Sigmoid colon (tissue), 7 donors: ENCODE measurements at regions of chr6 and their contacts with region 1.

Region 1: DNA sequence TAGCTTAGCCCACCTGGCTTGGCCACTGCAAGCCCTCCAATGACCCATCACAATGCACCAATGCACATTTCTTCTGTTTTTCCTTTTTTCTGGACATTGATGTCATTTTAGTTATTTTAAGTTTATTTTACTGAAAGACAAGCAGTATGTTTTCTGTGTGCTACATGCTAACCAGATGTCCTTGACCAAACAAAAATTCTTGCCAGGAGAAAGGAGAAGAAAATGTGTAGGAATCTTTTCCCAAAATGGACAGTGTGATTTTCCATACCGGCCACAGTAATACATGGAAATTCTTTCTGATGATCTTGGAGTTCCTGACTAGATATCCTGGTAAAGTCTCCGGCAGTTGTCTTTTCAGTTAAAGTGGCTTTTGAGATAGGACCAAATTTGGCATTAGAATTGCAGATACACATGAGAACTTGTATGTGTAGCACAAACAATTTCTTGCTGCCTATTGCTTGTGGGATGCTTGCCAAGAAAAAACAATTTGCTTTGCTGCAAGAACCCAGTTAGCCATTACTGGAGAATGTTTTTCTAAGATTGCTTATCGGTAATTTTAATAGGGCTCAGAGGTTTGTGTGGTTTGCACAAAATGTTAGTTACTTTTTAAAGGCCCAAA is 696.5 kb upstream of the CITED2 start:
- DNase-seq: no peak
- H3K4me3 ChIP-seq: no peak overlapping the region
- H3K27ac ChIP-seq: peak overlapping the region in 1 of 4 donors; percentile 45
- H3K4me1 ChIP-seq: peaks cover 0 to 40% (median 34%) of the 10 kb centered on the region in 4 donors
- H3K27me3 ChIP-seq: no peaks in the 10 kb centered on the region
- CTCF ChIP-seq: no peak
- EP300 ChIP-seq: no peak
- POLR2A ChIP-seq: no peak

Region 2: DNA sequence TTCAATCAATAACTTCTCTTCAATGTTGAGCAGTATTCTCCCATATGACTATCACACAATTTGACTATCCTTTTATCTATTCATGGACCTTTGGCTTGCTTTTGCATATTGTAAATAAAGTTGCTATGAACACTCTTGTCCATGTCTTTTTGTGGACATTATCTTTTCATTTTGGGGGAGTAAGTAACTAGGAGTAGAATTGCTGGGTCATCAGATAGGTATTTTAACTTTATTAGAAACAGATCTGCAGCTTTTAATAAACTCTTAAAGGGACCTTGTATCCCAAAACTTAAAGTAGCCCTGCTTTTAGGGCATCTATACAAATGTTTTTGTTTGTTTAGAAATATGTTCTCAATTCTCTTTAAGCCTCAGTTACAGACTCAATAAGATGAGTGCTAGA is 82.3 kb before region 1 on chr6:
- intact Hi-C with region 1: loop called (anchors 5 kb)
- DNase-seq: no peak
- H3K4me3 ChIP-seq: no peak overlapping the region
- H3K27ac ChIP-seq: no peak overlapping the region
- H3K4me1 ChIP-seq: peaks cover 0 to 32% (median 21%) of the 10 kb centered on the region in 4 donors
- H3K27me3 ChIP-seq: no peaks in the 10 kb centered on the region
- CTCF ChIP-seq: no peak
- EP300 ChIP-seq: no peak
- POLR2A ChIP-seq: no peak